ENCODE measurements at regions of chr16 and their contacts with region 1.

Region 1: DNA sequence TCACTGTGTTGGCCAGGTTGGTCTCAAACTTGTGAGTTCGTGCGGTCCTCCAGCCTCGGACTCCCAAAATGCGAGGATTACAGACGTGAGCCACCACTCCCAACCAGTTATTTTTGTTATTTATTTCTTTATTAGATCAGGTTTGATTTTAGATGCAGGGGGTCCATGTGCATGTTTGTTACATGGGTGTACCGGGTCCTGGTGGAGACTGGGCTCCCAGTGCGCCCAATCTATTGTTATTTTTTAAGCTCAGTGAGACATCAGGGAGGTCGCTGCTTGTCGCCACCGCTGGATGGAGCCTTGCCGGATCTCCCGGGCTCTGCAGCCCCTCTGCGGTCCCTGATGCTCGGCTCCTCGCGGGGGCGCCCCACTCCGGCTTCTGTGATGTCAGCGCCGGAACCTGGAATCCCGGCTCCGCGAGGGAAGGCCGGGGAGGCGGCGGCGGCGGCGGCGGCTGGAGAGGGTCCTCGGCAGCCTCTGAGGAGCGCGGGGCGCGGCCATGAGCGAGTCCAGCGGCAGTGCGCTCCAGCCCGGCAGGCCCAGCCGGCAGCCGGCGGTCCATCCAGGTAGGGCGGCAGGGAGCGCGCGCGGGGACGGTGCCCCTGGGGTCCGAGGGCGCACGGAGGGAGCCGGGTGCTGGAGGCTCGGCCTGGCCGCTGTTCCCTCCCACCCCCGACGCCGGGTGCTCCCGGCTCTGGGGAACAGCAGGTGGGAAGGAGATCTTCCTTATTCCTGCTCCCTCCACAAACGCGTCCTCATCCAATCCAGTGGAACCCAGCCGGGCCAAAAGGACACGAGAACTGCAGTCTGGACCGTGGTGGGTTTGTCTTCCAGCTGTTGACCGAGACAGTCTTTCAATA is at the start of gene TMC7:
- DNase-seq: peak; percentile 89
- H3K4me3 ChIP-seq: peak within 1 kb of the TSS; percentile 34 to 83 (median 64)
- H3K27ac ChIP-seq: peak within 1 kb of the TSS; percentile 2
- H3K4me1 ChIP-seq: peaks cover 7% of the 10 kb centered on the region
- H3K27me3 ChIP-seq: peaks cover 0 to 2% of the 10 kb centered on the region in 2 experiments
- CTCF ChIP-seq: peak; percentile 95
- POLR2A ChIP-seq: no peak
- total RNA-seq, gene TMC7: 6.9 and 7.0 TPM in 2 replicates

Region 2: DNA sequence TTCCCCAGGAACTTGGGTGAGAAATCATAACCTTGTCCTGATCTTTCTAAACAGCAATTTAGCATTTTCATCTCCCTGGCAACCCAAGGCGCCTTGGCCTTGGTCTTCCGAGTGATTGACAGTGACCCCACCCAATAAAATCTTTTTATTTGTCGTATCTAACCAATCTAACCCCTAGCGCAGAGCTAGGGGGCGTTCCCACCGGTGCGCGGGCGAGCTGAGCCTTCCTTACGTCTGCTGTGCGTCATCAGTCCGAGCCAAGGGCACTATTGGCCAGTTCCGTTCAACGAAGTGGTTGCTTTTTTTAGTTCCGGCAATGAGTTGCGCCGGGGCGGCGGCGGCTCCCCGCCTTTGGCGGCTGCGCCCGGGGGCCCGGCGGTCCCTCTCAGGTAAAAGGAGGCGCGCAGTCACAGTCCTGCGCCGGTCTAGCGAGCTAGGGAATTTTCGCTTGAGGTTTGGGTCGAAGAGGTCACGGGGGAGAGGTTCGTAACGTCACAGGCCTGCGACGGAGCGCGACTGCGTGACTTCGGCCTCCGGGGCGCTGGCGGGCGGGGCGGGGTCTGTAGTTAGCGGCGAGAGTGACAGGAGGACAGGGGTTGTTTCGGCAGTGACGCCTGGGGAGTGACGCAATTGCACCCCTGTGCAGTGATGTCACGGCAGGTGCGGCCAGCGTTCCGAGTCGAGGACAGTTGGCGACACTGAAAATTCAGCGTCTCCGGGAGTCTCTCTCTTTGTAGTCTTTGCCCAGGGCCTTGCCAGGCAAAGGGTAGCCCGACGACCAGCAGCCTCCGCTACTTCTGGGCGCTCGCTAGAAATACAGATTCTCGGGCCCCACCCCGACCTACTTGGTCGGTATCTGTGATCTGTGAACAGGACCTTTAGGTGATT is 83.8 kb after region 1 on chr16 and contains the start of gene COQ7:
- CTCF ChIA-PET with region 1: interaction called, 132 read pairs
- POLR2A ChIA-PET with region 1: no interaction called
- dilution Hi-C with region 1: no loop called
- intact Hi-C with region 1: loop called (anchors 1 kb)
- DNase-seq: peak; percentile 99
- H3K4me3 ChIP-seq: peak within 1 kb of the TSS; percentile 46 to 85 (median 57)
- H3K27ac ChIP-seq: peak within 1 kb of the TSS; percentile 93
- H3K4me1 ChIP-seq: peaks cover 14% of the 10 kb centered on the region
- H3K27me3 ChIP-seq: no peaks in the 10 kb centered on the region
- CTCF ChIP-seq: no peak
- POLR2A ChIP-seq: no peak
- total RNA-seq, gene COQ7: 22.1 and 24.2 TPM in 2 replicates

Region 3: GRCh38 chr16:19086322-19087199 is 102.8 kb after region 1 on chr16:
- CTCF ChIA-PET with region 1: interaction called, 18 read pairs
- POLR2A ChIA-PET with region 1: no interaction called
- dilution Hi-C with region 1: no loop called
- intact Hi-C with region 1: loop called (anchors 1 kb)
- DNase-seq: peak; percentile 95
- H3K4me3 ChIP-seq: peak overlapping the region; percentile 34 to 69 (median 41)
- H3K27ac ChIP-seq: peak overlapping the region; percentile 61
- H3K4me1 ChIP-seq: peaks cover 15% of the 10 kb centered on the region
- H3K27me3 ChIP-seq: no peaks in the 10 kb centered on the region
- CTCF ChIP-seq: peak; percentile 99
- POLR2A ChIP-seq: peak; percentile 94

Region 4: DNA sequence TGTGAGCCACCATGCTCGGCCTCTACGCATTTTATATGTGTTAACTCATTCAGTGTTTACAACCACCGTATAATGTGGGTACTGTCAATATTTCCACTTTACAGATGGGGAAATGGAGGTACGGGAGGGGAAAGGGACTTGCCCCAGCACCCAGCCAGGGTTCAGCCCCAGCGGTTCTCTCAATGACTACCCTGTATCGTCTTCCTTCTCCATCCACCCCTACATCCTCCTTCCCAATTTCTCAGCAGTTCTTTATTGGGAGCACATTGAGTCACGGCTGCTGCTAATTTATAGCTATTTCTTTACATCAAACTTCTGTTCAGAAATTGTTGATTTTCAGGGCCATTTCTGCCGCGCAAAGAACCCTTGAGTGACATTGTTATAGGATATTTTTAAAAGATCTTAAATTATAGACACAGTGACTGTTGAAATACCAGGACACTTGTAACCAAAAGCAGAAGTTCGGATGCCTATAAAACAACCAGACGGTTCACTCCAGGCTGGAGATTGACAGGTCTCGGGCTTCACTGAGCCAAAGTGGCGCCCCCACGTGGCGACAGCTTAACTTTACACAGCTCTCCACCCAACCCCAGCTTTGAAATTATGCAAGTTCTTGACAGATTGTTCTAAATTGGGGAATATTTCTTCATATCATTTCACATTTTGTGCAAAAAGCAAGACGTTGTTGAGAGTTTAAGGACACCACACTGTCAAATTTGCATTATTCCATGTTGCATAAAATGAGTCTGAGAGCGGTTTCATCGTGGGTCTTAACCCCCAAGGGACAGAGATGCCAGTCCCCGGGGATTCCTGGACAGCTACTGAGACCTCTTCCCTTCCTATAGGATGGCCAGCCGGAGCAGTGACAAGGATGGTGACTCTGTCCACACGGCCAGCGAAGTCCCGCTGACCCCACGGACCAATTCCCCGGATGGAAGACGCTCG is 196.0 kb after region 1 on chr16:
- CTCF ChIA-PET with region 1: interaction called, 7 read pairs
- POLR2A ChIA-PET with region 1: no interaction called
- dilution Hi-C with region 1: no loop called
- intact Hi-C with region 1: loop called (anchors 5 kb)
- DNase-seq: peak; percentile 63
- H3K4me3 ChIP-seq: no peak overlapping the region
- H3K27ac ChIP-seq: no peak overlapping the region
- H3K4me1 ChIP-seq: peaks cover 2% of the 10 kb centered on the region
- H3K27me3 ChIP-seq: peaks cover 0 to 6% of the 10 kb centered on the region in 2 experiments
- CTCF ChIP-seq: peak; percentile 73 to 87
- POLR2A ChIP-seq: no peak

Region 5: GRCh38 chr16:19210280-19210924 is 226.6 kb after region 1 on chr16:
- CTCF ChIA-PET with region 1: no interaction called
- POLR2A ChIA-PET with region 1: no interaction called
- dilution Hi-C with region 1: no loop called
- intact Hi-C with region 1: no loop called
- DNase-seq: no peak
- H3K4me3 ChIP-seq: no peak overlapping the region
- H3K27ac ChIP-seq: no peak overlapping the region
- H3K4me1 ChIP-seq: no peaks in the 10 kb centered on the region
- H3K27me3 ChIP-seq: no peaks in the 10 kb centered on the region
- CTCF ChIP-seq: no peak
- POLR2A ChIP-seq: no peak

Region 6: GRCh38 chr16:19521471-19522396 is 537.9 kb after region 1 on chr16 and contains the start of gene GDE1:
- CTCF ChIA-PET with region 1: no interaction called
- POLR2A ChIA-PET with region 1: no interaction called
- dilution Hi-C with region 1: no loop called
- intact Hi-C with region 1: loop called (anchors 10 kb)
- DNase-seq: peak; percentile 92
- H3K4me3 ChIP-seq: peak within 1 kb of the TSS; percentile 88 to 93 (median 89)
- H3K27ac ChIP-seq: peak within 1 kb of the TSS; percentile 50
- H3K4me1 ChIP-seq: peaks cover 21% of the 10 kb centered on the region
- H3K27me3 ChIP-seq: no peaks in the 10 kb centered on the region
- CTCF ChIP-seq: peak in 1 of 2 donors; percentile 64
- POLR2A ChIP-seq: peak; percentile 80
- total RNA-seq, gene GDE1: 50.5 and 51.5 TPM in 2 replicates

Measured in endothelial cell of umbilical vein (primary cell).